ENCODE measurements at regions of chr1 and their contacts with region 1.

Region 1: DNA sequence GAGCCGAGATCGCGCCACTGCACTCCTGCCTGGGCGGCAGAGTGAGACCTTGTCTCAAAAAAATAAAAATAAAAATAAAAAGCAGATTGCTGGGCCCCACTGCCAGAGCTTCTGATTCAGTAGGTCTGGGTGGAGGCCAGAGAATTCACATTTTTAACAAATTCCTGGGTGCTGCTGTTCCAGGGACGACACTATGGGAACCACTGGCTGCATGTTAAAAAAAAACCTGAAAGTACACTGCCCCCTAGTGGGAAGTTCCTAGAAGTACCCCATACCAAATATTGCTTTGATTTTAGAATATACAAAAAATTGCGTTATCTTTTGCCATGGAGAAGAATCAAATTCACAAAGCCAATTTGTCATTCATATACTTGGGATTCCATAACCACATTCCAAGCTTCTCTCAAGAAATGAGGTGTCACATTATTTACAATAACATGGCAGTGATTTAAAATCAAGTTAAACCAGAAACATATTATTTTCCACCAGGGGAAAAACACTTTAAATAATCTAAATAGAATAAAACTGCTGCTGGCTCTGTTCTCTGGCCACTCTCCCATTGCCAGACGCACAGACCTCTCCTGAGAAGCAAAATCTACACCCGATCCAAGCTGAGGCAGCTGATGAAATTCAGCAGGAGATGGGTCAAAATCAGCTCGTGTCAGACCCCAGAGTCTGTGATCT is 27.4 kb downstream of the SYF2 start:
- DNase-seq: no peak
- H3K4me3 ChIP-seq: no peak overlapping the region
- H3K27ac ChIP-seq: no peak overlapping the region
- H3K4me1 ChIP-seq: no peaks in the 10 kb centered on the region
- H3K27me3 ChIP-seq: no peaks in the 10 kb centered on the region
- CTCF ChIP-seq: peak; percentile 18 to 44 (median 35)
- EP300 ChIP-seq: no peak
- POLR2A ChIP-seq: no peak

Region 2: GRCh38 chr1:24847995-24848881 is 356.7 kb before region 1 on chr1:
- intact Hi-C with region 1: loop called in 1 of 4 experiments (anchors 5 kb)
- DNase-seq: peak; percentile 81 to 88 (median 85)
- H3K4me3 ChIP-seq: peak overlapping the region; percentile 52
- H3K27ac ChIP-seq: no peak overlapping the region
- H3K4me1 ChIP-seq: peaks cover 2% of the 10 kb centered on the region
- H3K27me3 ChIP-seq: no peaks in the 10 kb centered on the region
- CTCF ChIP-seq: peak; percentile 78 to 93 (median 88)
- EP300 ChIP-seq: no peak
- POLR2A ChIP-seq: no peak